Esophagus muscularis mucosa (tissue), 4 donors: ENCODE measurements at regions of chrX and their contacts with region 1.

Region 1: DNA sequence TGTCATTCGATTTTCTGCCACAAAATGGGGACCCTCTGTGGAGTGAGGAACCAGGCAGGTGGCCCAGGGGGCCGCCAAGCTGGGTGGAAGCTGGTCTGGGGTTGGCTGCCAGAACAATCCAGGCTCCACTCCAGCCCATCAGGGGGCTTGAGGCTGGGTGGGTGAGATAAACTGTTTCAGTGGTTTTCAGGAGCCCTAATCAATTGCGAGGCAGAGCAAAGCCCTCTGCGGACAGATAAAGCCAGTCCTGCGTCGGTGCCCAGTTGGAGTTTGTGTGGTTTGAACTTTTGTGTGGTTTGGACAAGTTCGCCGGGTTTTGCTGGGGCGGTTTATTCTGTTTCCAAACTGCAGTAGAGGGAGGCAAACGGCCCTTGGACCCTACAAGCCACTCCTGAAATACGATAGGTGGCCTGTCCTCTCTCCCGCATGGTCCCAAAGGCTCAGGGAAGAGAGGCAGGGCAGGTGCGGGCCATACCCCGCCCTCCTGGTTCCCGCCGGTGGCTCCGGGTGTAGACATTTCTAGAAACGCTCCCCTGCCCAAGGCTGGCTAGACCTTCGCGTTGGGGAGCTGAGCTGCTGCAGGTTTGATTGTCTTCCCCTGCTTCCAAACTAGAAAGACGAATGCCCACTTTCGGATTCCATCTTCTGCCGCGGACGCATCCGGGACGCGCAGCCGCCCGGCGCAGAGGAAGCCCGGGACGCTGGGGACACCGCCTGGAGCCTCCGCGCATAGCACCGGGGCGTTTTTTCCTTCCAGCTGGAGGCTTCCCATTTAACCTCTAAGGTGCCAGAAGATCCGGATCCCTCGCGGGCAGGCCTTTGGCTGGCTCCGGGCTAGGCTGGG is 169.0 kb upstream of the BCOR start:
- DNase-seq: no peak
- H3K4me3 ChIP-seq: peak overlapping the region; percentile 50 to 59 (median 54)
- H3K27ac ChIP-seq: peak overlapping the region; percentile 49 to 73 (median 62)
- H3K4me1 ChIP-seq: peaks cover 0 to 29% (median 17%) of the 10 kb centered on the region in 4 donors
- H3K27me3 ChIP-seq: no peaks in the 10 kb centered on the region
- CTCF ChIP-seq: peak; percentile 52 to 83 (median 66)
- EP300 ChIP-seq: no peak
- POLR2A ChIP-seq: no peak

Region 2: GRCh38 chrX:39814391-39814790 is 452.3 kb before region 1 on chrX:
- intact Hi-C with region 1: loop called (anchors 5 kb)
- DNase-seq: no peak
- H3K4me3 ChIP-seq: no peak overlapping the region
- H3K27ac ChIP-seq: peak overlapping the region in 1 of 4 donors; percentile 36
- H3K4me1 ChIP-seq: peaks cover 0 to 20% (median 14%) of the 10 kb centered on the region in 4 donors
- H3K27me3 ChIP-seq: no peaks in the 10 kb centered on the region
- CTCF ChIP-seq: peak; percentile 36 to 50 (median 42)
- EP300 ChIP-seq: no peak
- POLR2A ChIP-seq: no peak

Region 3: GRCh38 chrX:40169193-40170101 is 97.3 kb before region 1 on chrX:
- intact Hi-C with region 1: loop called (anchors 10 kb)
- DNase-seq: no peak
- H3K4me3 ChIP-seq: no peak overlapping the region
- H3K27ac ChIP-seq: peak overlapping the region in 3 of 4 donors; percentile 30 to 96 (median 90)
- H3K4me1 ChIP-seq: peaks cover 25 to 79% (median 58%) of the 10 kb centered on the region in 4 donors
- H3K27me3 ChIP-seq: peaks cover 0 to 22% (median 2%) of the 10 kb centered on the region in 4 donors
- CTCF ChIP-seq: peak; percentile 20 to 33 (median 23)
- EP300 ChIP-seq: no peak
- POLR2A ChIP-seq: no peak

Region 4: DNA sequence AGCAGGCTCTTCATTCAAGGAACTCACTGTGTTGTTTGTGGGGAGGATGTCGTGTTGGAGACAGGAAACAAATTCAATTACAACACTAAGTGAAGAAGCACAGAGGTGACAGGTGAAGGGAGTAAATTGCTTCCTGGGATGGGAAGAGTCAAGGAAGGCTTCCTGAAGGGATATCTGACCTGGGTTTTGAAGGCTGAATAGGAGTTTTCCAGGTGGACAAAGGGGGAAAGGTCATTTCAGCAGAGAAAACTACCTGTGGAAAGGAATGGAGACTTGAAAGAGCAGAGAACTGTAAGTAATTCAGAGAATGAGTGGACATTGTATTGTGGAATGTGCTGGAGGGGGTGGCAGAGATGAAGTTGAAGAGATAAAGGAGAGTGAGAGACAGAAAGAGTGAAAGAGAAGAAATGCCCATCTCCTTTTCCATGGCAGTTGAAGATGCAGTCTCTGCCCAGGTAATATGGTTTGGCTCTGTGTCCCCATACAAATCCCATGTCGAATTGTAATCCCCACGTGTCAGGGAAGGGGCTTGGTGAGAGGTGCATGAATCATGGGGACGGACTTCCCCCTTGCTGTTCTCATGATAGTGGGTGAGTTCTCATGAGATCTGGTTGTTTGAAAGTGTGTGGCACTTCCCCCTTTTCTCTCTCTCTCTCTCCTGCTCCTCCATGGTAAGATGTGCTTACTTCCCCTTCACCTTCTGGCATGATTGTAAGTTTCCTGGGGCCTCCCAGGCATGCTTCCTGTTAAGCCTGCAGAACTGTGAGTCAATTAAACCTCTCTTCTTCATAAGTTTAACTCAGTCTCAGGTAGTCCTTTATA is 36.8 kb after region 1 on chrX:
- intact Hi-C with region 1: no loop called
- DNase-seq: no peak
- H3K4me3 ChIP-seq: no peak overlapping the region
- H3K27ac ChIP-seq: no peak overlapping the region
- H3K4me1 ChIP-seq: no peaks in the 10 kb centered on the region
- H3K27me3 ChIP-seq: peaks cover 0 to 8% (median 0%) of the 10 kb centered on the region in 4 donors
- CTCF ChIP-seq: no peak
- EP300 ChIP-seq: no peak
- POLR2A ChIP-seq: no peak